Left cardiac atrium (tissue), 4 donors: ENCODE measurements at regions of chr3 and their contacts with region 1.

Region 1: DNA sequence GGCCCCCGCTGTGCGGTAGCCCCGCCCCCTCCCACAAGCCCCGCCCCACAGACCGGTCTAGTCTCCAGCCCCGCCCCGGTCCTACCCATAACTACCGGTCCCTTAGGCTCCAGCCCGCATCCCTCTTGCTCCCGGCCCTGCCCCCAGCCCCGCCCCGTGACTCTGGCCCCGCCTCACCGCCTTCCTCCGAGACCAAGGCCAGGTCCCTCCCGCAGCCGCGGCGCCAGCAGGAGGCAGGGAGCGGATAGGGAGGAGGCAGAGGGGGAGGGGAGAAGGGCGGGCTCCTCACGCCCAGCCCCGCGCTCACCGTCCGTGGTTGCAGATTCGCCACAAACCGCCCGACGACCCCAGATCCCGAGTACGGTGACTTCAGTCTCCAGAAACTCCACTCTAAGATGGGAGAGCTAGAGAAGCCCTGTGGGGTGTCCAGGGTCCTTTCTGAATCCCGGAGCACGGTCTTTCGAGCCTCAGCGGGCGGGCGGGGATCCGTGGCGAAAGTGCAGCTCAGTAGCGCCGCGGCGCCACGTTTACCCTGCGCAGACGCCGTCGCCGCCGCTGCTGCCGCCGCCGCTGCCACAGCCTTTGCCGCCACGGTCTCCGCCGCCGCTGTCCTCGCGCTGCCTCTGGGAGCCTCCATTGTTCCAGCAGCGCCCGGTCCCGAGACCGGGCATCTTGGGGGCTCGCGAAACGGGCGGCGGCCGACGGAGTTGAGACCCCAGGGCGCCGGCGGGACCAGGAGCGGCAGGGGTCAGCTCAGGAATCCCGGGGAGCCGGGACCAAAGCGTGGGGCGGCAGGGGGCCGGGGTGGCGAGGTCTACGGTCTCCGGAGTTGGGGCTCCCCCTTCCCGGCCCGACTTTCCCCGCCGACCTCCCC is at the start of gene BRPF1:
- DNase-seq: peak; percentile 100
- ATAC-seq: peak; percentile 98 to 99
- total RNA-seq, gene BRPF1: 10.2 to 14.6 TPM

Region 2: GRCh38 chr3:9503283-9503682 is 228.2 kb before region 1 on chr3:
- intact Hi-C with region 1: loop called (anchors 10 kb)
- DNase-seq: peak; percentile 64
- ATAC-seq: peak; percentile 30 to 44

Region 3: GRCh38 chr3:9749645-9750555 is 18.5 kb after region 1 on chr3 and contains the start of gene OGG1:
- intact Hi-C with region 1: loop called in 1 of 2 experiments (anchors 2 kb)
- DNase-seq: peak; percentile 98
- ATAC-seq: peak; percentile 98 to 99
- total RNA-seq, gene OGG1: 11.8 to 12.6 TPM

Region 4: GRCh38 chr3:9809615-9810432 is 78.4 kb after region 1 on chr3 and contains the start of gene TTLL3:
- intact Hi-C with region 1: loop called in 1 of 2 experiments (anchors 10 kb)
- DNase-seq: peak; percentile 86
- ATAC-seq: peak; percentile 92 to 93
- total RNA-seq, gene TTLL3: 15.4 to 20.4 TPM

Region 5: GRCh38 chr3:10263646-10264363 is 532.4 kb after region 1 on chr3:
- intact Hi-C with region 1: no loop called
- DNase-seq: peak; percentile 42
- ATAC-seq: peak; percentile 84 to 91